CD4-positive, alpha-beta memory T cell (primary cell): ENCODE measurements at regions of chr2 and their contacts with region 1.

Region 1: DNA sequence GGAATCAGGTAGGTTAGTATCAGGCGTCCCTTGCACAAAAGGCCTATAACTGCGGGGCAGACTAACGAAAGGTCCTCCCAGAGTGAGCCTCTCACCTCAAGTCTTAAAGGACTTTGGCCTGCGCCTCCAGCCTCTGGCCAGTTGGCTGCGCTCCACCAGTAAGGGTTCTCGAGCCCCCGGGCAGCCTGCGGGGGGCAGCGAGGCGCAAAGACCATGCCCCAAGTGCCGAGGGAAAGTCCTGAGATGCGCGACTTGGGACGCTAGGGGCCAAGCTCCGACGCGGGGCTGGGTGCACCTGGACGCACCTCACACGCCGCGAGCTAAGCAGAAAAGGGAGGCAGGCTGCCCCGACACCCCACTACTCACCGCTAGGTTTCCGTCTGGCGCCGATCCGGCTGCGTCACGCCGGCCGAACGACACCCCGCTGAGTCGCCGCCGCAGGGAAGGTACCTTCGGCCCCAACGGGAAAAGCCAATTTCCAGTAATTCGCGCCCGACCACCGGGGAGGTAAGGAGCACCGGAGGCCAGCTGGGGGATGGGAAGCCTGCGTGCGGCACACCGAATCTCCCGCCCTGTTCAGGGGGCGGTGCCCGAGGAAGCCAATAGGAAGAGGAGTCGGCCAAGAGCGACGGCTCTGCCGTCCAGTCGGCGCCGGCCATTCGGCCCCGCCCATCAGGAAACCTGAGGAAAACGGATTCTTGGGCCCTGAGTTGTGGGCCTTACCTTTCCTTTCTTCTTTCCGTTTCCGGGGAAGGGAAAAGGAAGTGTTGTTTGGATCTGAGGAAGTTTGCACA is at the start of gene ORC2:
- DNase-seq: peak; percentile 93 to 97 (median 94)
- H3K4me3 ChIP-seq: peak within 1 kb of the TSS; percentile 87 to 95
- H3K4me3 Mint-ChIP-seq: peak within 1 kb of the TSS; percentile 96 to 99 (median 98)
- H3K27ac ChIP-seq: peak within 1 kb of the TSS; percentile 79
- H3K27ac Mint-ChIP-seq: peak within 1 kb of the TSS; percentile 98 to 100 (median 99)
- H3K4me1 ChIP-seq: peaks cover 47% of the 10 kb centered on the region
- H3K4me1 Mint-ChIP-seq: peaks cover 35 to 73% (median 56%) of the 10 kb centered on the region in 4 donors
- H3K27me3 ChIP-seq: no peaks in the 10 kb centered on the region
- H3K27me3 Mint-ChIP-seq: no peaks in the 10 kb centered on the region
- total RNA-seq, gene ORC2: 72.2 to 76.4 TPM

Region 2: DNA sequence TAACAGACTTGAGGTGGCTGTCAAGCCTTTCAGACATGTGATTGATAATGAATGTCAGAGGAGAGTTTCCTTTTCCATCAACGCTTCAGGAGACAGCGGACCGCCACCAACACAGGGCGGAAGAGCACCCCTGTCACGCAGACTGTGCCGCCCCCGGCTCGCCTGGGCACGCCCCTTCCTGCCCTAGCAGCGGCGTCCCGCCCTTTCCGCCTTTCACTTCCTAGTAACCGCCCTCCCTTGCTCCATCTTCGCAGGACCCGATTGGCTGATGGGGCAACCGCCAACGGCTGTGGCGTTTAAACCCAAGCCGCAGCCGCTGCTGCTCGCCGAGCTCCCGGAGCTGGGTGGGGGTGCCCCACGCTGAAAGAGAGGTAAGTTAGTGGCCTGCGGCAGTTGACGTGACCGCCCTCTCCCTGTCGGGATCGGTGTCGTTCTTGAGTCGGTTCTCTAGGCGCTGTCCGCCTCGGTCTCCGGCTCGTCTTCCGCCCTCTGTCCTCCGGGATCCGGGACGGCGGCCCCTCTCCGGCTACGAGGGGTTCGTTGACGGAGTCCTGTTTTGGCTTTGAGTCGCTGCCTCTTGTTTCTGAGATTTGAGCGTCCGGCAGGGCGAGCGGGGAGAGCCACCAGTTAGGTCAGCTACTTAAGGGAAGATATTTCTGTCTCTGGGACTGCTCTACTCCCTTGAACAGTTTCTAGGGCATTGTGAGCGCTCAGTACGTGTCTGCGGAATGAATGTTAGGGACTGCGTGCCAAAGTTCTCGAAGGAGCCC is 437.3 kb before region 1 on chr2 and contains the start of gene SGO2:
- CTCF ChIA-PET with region 1: no interaction called
- POLR2A ChIA-PET with region 1: no interaction called
- intact Hi-C with region 1: loop called (anchors 2 kb)
- DNase-seq: peak; percentile 93 to 97 (median 95)
- H3K4me3 ChIP-seq: peak within 1 kb of the TSS; percentile 82 to 98
- H3K4me3 Mint-ChIP-seq: peak within 1 kb of the TSS; percentile 91 to 97 (median 93)
- H3K27ac ChIP-seq: peak within 1 kb of the TSS; percentile 55
- H3K27ac Mint-ChIP-seq: peak within 1 kb of the TSS; percentile 83 to 93 (median 85)
- H3K4me1 ChIP-seq: peaks cover 14% of the 10 kb centered on the region
- H3K4me1 Mint-ChIP-seq: peaks cover 6 to 15% (median 12%) of the 10 kb centered on the region in 4 donors
- H3K27me3 ChIP-seq: no peaks in the 10 kb centered on the region
- H3K27me3 Mint-ChIP-seq: no peaks in the 10 kb centered on the region
- total RNA-seq, gene SGO2: 4.4 to 4.8 TPM

Region 3: GRCh38 chr2:200888704-200889625 is 74.4 kb before region 1 on chr2 and contains the starts of genes NIF3L1 and PPIL3:
- CTCF ChIA-PET with region 1: interaction called, 4 read pairs
- POLR2A ChIA-PET with region 1: interaction called, 15 read pairs
- intact Hi-C with region 1: loop called (anchors 1 kb)
- DNase-seq: peak; percentile 96 to 98 (median 96)
- H3K4me3 ChIP-seq: peak within 1 kb of the TSS; percentile 91 to 92
- H3K4me3 Mint-ChIP-seq: peak within 1 kb of the TSS; percentile 90 to 98 (median 96)
- H3K27ac ChIP-seq: peak within 1 kb of the TSS; percentile 85
- H3K27ac Mint-ChIP-seq: peak within 1 kb of the TSS; percentile 98 to 100 (median 99)
- H3K4me1 ChIP-seq: peaks cover 31% of the 10 kb centered on the region
- H3K4me1 Mint-ChIP-seq: peaks cover 30 to 57% (median 45%) of the 10 kb centered on the region in 4 donors
- H3K27me3 ChIP-seq: no peaks in the 10 kb centered on the region
- H3K27me3 Mint-ChIP-seq: no peaks in the 10 kb centered on the region
- total RNA-seq, gene NIF3L1: 30.0 to 30.3 TPM
- total RNA-seq, gene PPIL3: 48.0 to 57.7 TPM

Region 4: DNA sequence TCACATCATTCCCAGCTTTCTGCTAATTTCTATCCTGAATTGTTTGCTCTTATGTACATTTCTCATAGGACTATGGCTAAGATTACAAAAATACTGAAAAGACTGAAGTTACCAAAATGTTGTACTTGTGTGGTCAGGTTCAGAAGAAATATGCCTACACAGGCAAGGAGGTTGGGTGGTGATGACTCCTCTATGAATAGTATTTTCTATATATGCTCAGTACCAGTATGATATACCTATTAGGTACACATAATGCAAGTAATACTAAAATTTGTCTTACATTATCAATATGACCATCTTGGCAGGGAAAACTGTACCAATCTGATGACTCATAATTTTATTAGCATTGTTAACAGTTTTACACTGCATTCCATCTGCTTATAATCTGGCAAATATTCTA is 12.4 kb after region 1 on chr2:
- CTCF ChIA-PET with region 1: interaction called, 31 read pairs
- POLR2A ChIA-PET with region 1: interaction called, 9 read pairs
- intact Hi-C with region 1: no loop called
- DNase-seq: no peak
- H3K4me3 ChIP-seq: no peak overlapping the region
- H3K4me3 Mint-ChIP-seq: no peak overlapping the region
- H3K27ac ChIP-seq: no peak overlapping the region
- H3K27ac Mint-ChIP-seq: peak overlapping the region in 3 of 7 donors; percentile 5 to 72 (median 6)
- H3K4me1 ChIP-seq: no peaks in the 10 kb centered on the region
- H3K4me1 Mint-ChIP-seq: peaks cover 0 to 1% (median 0%) of the 10 kb centered on the region in 4 donors
- H3K27me3 ChIP-seq: no peaks in the 10 kb centered on the region
- H3K27me3 Mint-ChIP-seq: no peaks in the 10 kb centered on the region

Region 5: DNA sequence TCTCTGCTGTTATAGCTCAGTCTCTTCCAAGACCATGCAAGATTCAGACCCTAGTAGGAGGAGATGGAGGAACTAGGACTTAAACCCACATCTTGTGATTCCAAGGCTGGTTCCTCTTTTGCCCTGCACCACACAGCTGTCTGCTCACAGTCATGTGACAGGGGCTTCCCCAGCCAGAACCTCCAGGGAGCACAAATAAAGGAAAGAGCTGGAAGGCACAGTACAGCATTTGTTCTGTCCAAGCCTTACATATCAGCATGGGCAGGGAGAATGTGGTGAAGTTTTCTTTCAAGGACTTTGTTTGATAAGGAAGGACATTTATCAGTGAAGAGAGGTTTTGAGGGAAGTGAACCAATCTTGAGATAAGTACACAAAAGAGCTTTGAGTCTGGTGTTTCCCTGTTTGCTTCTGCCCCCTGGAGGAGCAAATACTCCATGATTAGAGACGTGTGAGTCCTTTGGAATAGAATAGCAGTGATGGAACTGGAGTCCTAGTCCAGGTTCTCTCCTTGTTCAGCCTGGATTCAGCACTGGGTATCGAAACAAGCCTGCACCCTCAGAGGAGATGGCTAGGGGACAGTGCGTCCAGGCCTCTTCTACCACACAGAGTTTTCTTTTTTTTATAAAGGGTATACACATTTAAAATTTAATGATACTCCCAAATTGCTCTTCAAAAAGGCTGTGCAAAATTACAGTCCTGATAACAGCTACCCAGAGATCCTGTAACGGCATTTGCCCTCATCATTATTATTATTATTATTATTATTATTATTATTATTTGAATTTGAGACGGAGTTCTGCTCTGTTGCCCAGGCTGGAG is 195.0 kb after region 1 on chr2:
- CTCF ChIA-PET with region 1: interaction called, 26 read pairs
- POLR2A ChIA-PET with region 1: interaction called, 8 read pairs
- intact Hi-C with region 1: loop called (anchors 5 kb)
- DNase-seq: peak; percentile 64 to 75 (median 68)
- H3K4me3 ChIP-seq: no peak overlapping the region
- H3K4me3 Mint-ChIP-seq: peak overlapping the region in 3 of 8 donors; percentile 26 to 52 (median 30)
- H3K27ac ChIP-seq: peak overlapping the region; percentile 44
- H3K27ac Mint-ChIP-seq: peak overlapping the region; percentile 69 to 95 (median 89)
- H3K4me1 ChIP-seq: peaks cover 19% of the 10 kb centered on the region
- H3K4me1 Mint-ChIP-seq: peaks cover 9 to 23% (median 16%) of the 10 kb centered on the region in 4 donors
- H3K27me3 ChIP-seq: no peaks in the 10 kb centered on the region
- H3K27me3 Mint-ChIP-seq: no peaks in the 10 kb centered on the region

Region 6: DNA sequence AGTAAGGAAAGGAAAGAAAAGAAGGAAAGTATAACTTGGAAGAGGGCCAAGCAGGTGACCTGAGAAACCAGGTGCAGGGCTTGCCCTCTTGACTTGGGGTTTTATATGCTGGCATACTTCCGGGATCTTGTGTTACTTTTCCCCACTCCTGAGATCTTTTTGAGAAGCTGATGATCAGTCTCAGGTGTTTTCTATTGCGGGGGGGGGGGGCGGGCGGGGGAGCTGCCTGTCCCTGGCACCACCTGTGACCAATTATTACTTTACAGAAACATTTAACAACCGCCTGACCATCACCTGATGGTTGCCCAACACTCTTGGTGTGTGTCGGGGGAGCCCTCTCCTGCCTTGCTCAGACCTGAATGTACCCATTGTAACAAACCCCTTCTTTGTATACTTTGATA is 212.8 kb after region 1 on chr2:
- CTCF ChIA-PET with region 1: interaction called, 6 read pairs
- POLR2A ChIA-PET with region 1: interaction called, 6 read pairs
- intact Hi-C with region 1: loop called (anchors 2 kb)
- DNase-seq: no peak
- H3K4me3 ChIP-seq: no peak overlapping the region
- H3K4me3 Mint-ChIP-seq: no peak overlapping the region
- H3K27ac ChIP-seq: no peak overlapping the region
- H3K27ac Mint-ChIP-seq: peak overlapping the region in 1 of 7 donors; percentile 4
- H3K4me1 ChIP-seq: peaks cover 7% of the 10 kb centered on the region
- H3K4me1 Mint-ChIP-seq: peaks cover 8 to 26% (median 12%) of the 10 kb centered on the region in 4 donors
- H3K27me3 ChIP-seq: no peaks in the 10 kb centered on the region
- H3K27me3 Mint-ChIP-seq: no peaks in the 10 kb centered on the region

Region 7: DNA sequence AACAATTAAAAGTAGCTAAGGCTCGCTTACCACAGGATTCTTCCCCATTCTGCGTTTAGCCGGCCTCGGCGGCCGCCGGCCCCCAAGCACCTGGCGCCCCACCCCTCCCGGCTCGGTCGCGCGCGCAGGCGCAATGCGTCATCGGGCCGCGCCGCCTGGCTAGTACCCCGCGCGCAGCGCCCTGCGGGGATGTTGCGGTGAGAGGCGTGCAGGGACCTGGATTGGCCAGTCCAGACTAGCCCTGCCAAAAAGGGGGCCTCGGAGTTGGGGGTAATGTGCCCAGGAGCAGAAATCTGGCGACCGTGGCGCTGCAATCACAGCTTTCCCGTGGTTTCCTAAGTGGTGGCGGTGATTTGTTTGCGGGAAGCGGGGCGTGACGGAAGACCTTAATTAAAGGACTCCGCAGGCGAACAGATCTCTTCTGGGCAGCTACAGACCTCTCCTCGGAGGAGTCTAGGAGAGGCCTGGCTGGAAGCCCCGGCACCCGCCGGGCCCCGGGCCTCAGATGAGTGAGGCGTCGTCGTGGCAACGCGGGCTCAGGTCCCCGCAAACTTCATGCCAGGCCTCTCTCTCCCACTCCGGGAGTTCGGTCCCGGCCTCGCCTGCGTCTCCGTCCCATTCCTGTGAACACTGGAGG is 679.4 kb after region 1 on chr2:
- CTCF ChIA-PET with region 1: no interaction called
- POLR2A ChIA-PET with region 1: no interaction called
- intact Hi-C with region 1: loop called (anchors 5 kb)
- DNase-seq: peak; percentile 83 to 91 (median 89)
- H3K4me3 ChIP-seq: peak overlapping the region; percentile 92 to 97
- H3K4me3 Mint-ChIP-seq: peak overlapping the region; percentile 89 to 99 (median 96)
- H3K27ac ChIP-seq: peak overlapping the region; percentile 83
- H3K27ac Mint-ChIP-seq: peak overlapping the region; percentile 95 to 100 (median 96)
- H3K4me1 ChIP-seq: no peaks in the 10 kb centered on the region
- H3K4me1 Mint-ChIP-seq: peaks cover 7 to 23% (median 7%) of the 10 kb centered on the region in 4 donors
- H3K27me3 ChIP-seq: no peaks in the 10 kb centered on the region
- H3K27me3 Mint-ChIP-seq: no peaks in the 10 kb centered on the region